Activated naive CD4-positive, alpha-beta T cell treated with anti-CD3 and anti-CD28 coated beads for 36 hours (primary cell): ENCODE measurements at regions of chr12 and their contacts with region 1.

Region 1: GRCh38 chr12:49776413-49776812 is 35.1 kb downstream of the TMBIM6 start:
- DNase-seq: peak; percentile 80
- H3K4me3 Mint-ChIP-seq: no peak overlapping the region
- H3K27ac Mint-ChIP-seq: no peak overlapping the region
- H3K4me1 Mint-ChIP-seq: peaks cover 6% of the 10 kb centered on the region
- H3K27me3 Mint-ChIP-seq: peaks cover 3% of the 10 kb centered on the region

Region 2: DNA sequence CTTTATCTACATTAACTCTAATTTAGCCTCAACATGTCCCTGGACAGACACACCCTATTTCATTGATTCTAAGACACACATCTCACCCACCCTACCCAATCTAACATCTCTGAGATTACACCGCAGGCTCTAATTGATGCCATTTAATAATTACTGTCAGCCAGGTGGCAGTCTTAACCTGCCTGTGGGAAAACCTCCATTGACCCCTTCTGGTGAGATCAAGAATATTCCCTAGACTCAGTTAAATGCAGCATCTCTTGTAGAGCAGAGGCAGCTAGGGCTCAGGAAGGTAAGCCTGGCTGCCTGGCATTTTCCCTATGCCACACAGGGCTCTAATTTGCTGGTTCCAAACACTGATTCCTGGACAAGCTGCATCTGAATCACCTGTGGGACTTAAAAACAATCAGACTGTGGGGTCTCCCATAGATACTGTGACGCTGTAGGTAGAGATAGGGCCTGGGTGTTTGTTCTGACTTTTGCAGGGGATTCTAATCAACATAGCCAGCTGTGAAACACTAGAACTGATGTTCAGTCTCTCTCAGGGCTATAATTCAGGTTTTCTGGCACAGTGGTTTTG is 222.8 kb before region 1 on chr12:
- CTCF ChIA-PET with region 1: interaction called, 7 read pairs
- intact Hi-C with region 1: loop called (anchors 1 kb)
- DNase-seq: peak; percentile 29
- H3K4me3 Mint-ChIP-seq: no peak overlapping the region
- H3K27ac Mint-ChIP-seq: no peak overlapping the region
- H3K4me1 Mint-ChIP-seq: peaks cover 4% of the 10 kb centered on the region
- H3K27me3 Mint-ChIP-seq: no peaks in the 10 kb centered on the region

Region 3: GRCh38 chr12:49707128-49707811 is 69.1 kb before region 1 on chr12 and contains the start of gene FMNL3:
- CTCF ChIA-PET with region 1: interaction called, 24 read pairs
- intact Hi-C with region 1: loop called (anchors 1 kb)
- DNase-seq: peak; percentile 98
- H3K4me3 Mint-ChIP-seq: peak within 1 kb of the TSS; percentile 89
- H3K27ac Mint-ChIP-seq: peak within 1 kb of the TSS; percentile 85
- H3K4me1 Mint-ChIP-seq: peaks cover 45% of the 10 kb centered on the region
- H3K27me3 Mint-ChIP-seq: peaks cover 2% of the 10 kb centered on the region
- total RNA-seq, gene FMNL3: 20.0 to 20.7 TPM

Region 4: GRCh38 chr12:49750027-49750995 is 26.1 kb before region 1 on chr12:
- CTCF ChIA-PET with region 1: interaction called, 23 read pairs
- intact Hi-C with region 1: loop called (anchors 1 kb)
- DNase-seq: peak; percentile 87
- H3K4me3 Mint-ChIP-seq: peak overlapping the region; percentile 40
- H3K27ac Mint-ChIP-seq: peak overlapping the region; percentile 94
- H3K4me1 Mint-ChIP-seq: peaks cover 83% of the 10 kb centered on the region
- H3K27me3 Mint-ChIP-seq: no peaks in the 10 kb centered on the region

Region 5: GRCh38 chr12:49821373-49822287 is 45.2 kb after region 1 on chr12:
- CTCF ChIA-PET with region 1: interaction called, 13 read pairs
- intact Hi-C with region 1: no loop called
- DNase-seq: peak; percentile 28
- H3K4me3 Mint-ChIP-seq: no peak overlapping the region
- H3K27ac Mint-ChIP-seq: peak overlapping the region; percentile 62
- H3K4me1 Mint-ChIP-seq: peaks cover 29% of the 10 kb centered on the region
- H3K27me3 Mint-ChIP-seq: no peaks in the 10 kb centered on the region

Region 6: DNA sequence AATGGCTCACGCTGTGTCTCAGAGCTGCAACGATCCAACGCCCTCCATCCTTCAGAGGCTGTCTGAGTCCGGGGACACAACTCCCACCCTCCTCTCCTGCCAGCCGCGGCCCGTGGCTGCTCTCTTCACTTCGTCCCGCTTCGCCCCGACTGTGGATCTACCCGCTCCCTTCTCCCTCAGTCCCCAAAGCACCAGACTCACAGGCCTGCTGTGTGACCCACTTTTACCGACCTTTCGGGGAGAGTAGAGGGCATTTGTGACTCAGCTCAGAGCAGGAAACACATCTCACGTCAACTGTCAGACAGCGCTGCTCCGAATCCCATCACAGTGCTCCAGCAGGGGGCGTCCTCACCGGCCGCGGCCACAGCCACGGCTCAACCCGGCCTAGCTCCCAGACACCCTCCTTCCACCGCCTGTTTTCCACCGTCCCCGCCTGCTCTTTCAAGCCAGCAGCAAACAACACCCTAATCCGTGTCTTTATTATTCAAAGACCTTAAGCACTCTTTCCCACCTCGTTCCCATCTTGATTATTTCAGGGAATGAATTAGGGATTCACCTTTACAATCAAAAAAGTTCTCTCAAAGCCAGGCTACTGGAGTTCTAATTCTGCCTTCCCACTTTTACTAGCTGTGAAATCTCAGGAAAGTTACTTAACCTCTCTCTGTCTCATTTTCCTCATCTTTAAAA is 169.1 kb after region 1 on chr12:
- CTCF ChIA-PET with region 1: interaction called, 7 read pairs
- intact Hi-C with region 1: loop called (anchors 1 kb)
- DNase-seq: peak; percentile 94
- H3K4me3 Mint-ChIP-seq: peak overlapping the region; percentile 74
- H3K27ac Mint-ChIP-seq: peak overlapping the region; percentile 83
- H3K4me1 Mint-ChIP-seq: peaks cover 16% of the 10 kb centered on the region
- H3K27me3 Mint-ChIP-seq: no peaks in the 10 kb centered on the region